ENCODE measurements at regions of chr9 and their contacts with region 1.

Region 1: DNA sequence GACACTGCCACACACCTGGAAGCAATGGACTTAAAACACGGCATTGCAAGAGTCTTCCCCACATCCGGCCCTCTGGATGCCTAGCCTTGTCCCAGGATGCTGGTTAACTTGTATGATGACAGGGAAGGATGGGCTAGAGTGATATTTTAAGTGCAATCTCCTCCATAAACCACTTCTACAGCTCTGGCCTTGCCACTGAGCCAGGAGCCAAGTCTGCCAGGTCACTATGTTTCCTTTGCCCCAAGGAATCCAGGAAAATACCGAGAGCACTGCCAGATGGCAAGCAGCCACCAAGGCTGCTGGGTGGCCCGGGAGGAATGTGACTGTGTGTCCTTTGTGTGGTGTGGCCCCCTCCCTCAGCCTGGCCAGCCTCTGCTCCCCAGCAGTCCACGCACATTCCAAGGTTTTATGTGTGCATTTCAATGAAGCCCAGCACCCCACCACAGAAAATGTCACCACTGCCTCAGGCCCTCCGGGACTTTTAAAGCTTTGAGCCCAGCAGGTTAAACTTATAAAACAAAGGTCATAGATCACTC is 106.0 kb downstream of the FRMD3 start:
- DNase-seq: peak; percentile 69 to 81
- ATAC-seq: peak; percentile 59 to 95 (median 87)
- H3K4me3 ChIP-seq: no peak overlapping the region
- H3K27ac ChIP-seq: peak overlapping the region in 8 of 10 donors; percentile 7 to 70 (median 38)
- H3K4me1 ChIP-seq: peaks cover 10 to 48% (median 32%) of the 10 kb centered on the region in 9 donors
- H3K27me3 ChIP-seq: no peaks in the 10 kb centered on the region
- CTCF ChIP-seq: no peak

Region 2: DNA sequence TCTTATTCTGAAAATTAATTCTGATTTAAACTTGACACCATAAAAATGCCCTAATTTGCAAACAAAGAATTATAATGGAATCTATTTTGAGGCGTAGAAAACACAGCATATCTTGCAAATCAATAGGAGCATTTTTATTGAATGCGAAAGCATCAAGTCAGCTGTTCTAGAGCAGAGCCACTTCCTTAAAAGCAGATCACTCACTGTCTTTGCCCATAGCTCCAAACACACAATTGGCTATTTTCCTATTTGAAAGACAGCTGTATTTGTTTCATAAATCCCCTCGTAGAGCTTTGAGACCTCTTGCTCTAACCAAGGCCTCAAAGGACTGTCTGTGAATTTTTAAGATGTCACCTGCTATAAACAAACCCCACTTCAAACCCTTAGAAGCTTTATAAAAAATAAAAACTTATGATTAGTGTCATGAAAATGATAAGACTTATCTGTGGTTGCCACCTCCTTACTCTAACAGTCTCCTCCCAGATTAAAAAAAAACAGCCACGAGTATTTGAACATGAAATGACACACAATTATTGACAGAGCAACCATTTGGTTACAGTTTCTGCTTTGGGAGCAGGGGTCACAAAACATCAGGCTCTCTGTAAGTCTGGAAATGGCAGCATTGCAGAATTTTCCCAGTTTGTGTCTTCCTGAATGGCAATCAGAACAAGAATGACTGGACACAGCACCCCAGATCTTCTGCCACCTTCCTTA is 293.6 kb before region 1 on chr9:
- intact Hi-C with region 1: no loop called
- DNase-seq: no peak
- ATAC-seq: no peak
- H3K4me3 ChIP-seq: no peak overlapping the region
- H3K27ac ChIP-seq: no peak overlapping the region
- H3K4me1 ChIP-seq: no peaks in the 10 kb centered on the region
- H3K27me3 ChIP-seq: peaks cover 0 to 6% (median 0%) of the 10 kb centered on the region in 7 donors
- CTCF ChIP-seq: no peak

Region 3: GRCh38 chr9:83346655-83347420 is 85.3 kb before region 1 on chr9:
- intact Hi-C with region 1: loop called in 1 of 10 experiments (anchors 10 kb)
- DNase-seq: no peak
- ATAC-seq: peak in 2 of 8 donors; percentile 21 to 56
- H3K4me3 ChIP-seq: no peak overlapping the region
- H3K27ac ChIP-seq: peak overlapping the region in 1 of 10 donors; percentile 23
- H3K4me1 ChIP-seq: peaks cover 0 to 12% (median 8%) of the 10 kb centered on the region in 9 donors
- H3K27me3 ChIP-seq: no peaks in the 10 kb centered on the region
- CTCF ChIP-seq: no peak

Region 4: DNA sequence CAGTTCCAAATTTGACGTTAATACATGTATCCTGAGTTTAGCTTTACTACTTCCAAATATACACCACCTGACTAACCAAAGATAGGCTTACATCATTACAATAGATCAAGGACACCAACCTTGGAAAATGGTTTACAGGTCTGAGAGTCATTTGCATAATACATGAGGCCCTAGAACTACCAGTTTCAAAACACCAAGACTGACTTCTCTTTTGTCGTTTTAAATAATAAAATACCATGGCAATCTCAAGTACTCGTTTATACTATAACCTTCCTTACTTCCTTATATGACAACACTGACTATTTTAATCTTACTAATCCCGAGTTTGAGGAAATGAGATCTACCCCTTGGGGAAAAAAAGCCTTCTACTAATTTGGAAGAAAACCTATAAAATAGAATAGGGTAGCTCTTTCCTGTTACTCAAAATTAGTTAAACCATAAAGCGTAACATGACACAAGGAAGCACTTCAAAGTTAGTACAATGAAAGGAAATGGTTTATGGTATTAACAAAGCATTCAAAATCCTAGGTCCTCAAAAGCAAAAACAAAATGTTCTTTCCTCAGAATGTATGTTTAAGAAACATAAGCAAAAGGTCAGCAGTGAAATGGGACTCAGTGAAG is 233.5 kb after region 1 on chr9:
- intact Hi-C with region 1: no loop called
- DNase-seq: no peak
- ATAC-seq: peak in 1 of 8 donors; percentile 16
- H3K4me3 ChIP-seq: no peak overlapping the region
- H3K27ac ChIP-seq: peak overlapping the region in 3 of 10 donors; percentile 10 to 59 (median 25)
- H3K4me1 ChIP-seq: peaks cover 0 to 20% (median 6%) of the 10 kb centered on the region in 9 donors
- H3K27me3 ChIP-seq: no peaks in the 10 kb centered on the region
- CTCF ChIP-seq: no peak